ENCODE measurements at regions of chr5 and their contacts with region 1.

Region 1: GRCh38 chr5:180071531-180072255 is at the start of gene RNF130:
- DNase-seq: peak; percentile 95 to 96 (median 96)
- ATAC-seq: peak; percentile 85
- H3K4me3 ChIP-seq: peak within 1 kb of the TSS; percentile 59
- H3K27ac ChIP-seq: peak within 1 kb of the TSS; percentile 91
- H3K4me1 ChIP-seq: peaks cover 19 to 34% of the 10 kb centered on the region in 2 experiments
- H3K27me3 ChIP-seq: no peaks in the 10 kb centered on the region
- CTCF ChIP-seq: no peak
- EP300 ChIP-seq: no peak
- POLR2A ChIP-seq: peak; percentile 86
- RAD21 ChIP-seq: peak; percentile 13 to 16; a peak in 2 of 4 replicates
- polyA plus RNA-seq, gene RNF130: 5.8 to 6.8 TPM

Region 2: DNA sequence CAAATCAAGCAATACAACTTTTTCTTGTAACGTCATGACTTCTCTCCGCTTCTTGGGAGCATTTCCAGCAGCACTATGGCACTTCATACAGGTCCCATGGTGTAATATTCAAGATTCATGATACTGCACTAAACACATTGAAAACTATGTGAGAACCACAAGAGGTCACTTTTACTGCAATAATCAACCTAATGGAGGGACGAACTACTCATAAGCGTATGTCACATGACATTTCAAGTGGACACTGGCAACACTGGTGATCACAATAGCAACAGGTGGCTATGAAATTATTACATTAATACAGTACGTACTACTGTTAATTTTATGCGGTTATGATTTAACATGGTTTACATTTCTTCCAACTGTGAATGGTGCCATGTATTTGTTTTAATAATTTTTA is 85.4 kb before region 1 on chr5:
- CTCF ChIA-PET with region 1: no interaction called
- POLR2A ChIA-PET with region 1: no interaction called
- in situ Hi-C with region 1: no loop called
- intact Hi-C with region 1: loop called (anchors 5 kb)
- DNase-seq: peak in 2 of 4 experiments; percentile 22 to 29
- ATAC-seq: peak; percentile 61
- H3K4me3 ChIP-seq: no peak overlapping the region
- H3K27ac ChIP-seq: no peak overlapping the region
- H3K4me1 ChIP-seq: peaks cover 0 to 7% of the 10 kb centered on the region in 2 experiments; a peak in 2 of 5 replicates
- H3K27me3 ChIP-seq: no peaks in the 10 kb centered on the region
- CTCF ChIP-seq: peak in 2 of 3 experiments; percentile 3 to 53; a peak in 3 of 6 replicates
- EP300 ChIP-seq: no peak
- POLR2A ChIP-seq: no peak
- RAD21 ChIP-seq: peak in 1 of 2 experiments; percentile 71; a peak in 2 of 4 replicates

Measured in K562 (cell line).